AG04449 (cell line): ENCODE measurements at regions of chr13 and their contacts with region 1.

Region 1: GRCh38 chr13:36346222-36347083 is at the start of gene SPART:
- DNase-seq: no peak
- H3K4me3 ChIP-seq: peak within 1 kb of the TSS; percentile 88
- CTCF ChIP-seq: peak; percentile 99

Region 2: GRCh38 chr13:36029166-36029565 is 317.3 kb before region 1 on chr13:
- CTCF ChIA-PET with region 1: no interaction called
- POLR2A ChIA-PET with region 1: no interaction called
- DNase-seq: no peak
- H3K4me3 ChIP-seq: no peak overlapping the region
- CTCF ChIP-seq: no peak

Region 3: DNA sequence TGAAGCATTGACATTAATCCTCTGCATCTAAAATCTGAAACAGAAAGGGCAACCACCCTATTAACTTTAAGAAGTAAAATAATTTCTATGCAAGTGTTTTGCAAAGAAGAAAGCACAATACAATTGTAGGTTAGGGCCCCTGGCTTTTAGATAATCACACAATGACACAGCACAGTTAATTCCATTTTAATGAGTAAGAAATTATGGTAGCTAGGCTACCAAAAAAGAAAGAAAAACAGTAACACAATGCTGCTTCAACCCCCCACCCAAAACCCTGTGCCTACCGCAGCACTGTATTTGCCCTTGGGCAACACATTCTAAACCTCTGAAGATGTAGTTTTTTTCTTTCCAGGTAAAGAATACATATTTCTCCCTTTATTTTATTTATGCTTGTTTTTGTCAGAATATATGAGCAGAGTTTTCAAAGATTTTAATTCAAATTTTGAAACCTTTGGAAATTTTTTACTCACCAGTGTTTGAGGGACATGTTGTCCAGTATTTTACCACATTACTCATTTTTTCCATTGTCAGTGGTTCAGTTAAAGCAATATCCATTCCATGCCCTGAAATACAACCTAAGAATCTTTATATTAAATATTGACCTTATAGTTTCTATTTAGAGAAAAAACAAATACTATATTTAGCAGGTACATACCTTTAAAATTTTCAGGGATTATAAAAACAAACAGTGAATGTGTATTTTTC is 153.2 kb before region 1 on chr13:
- CTCF ChIA-PET with region 1: no interaction called
- POLR2A ChIA-PET with region 1: no interaction called
- DNase-seq: no peak
- H3K4me3 ChIP-seq: no peak overlapping the region
- CTCF ChIP-seq: no peak

Region 4: GRCh38 chr13:36362251-36362650 is 15.8 kb after region 1 on chr13:
- CTCF ChIA-PET with region 1: interaction called, 52 read pairs
- POLR2A ChIA-PET with region 1: no interaction called
- DNase-seq: no peak
- H3K4me3 ChIP-seq: no peak overlapping the region
- CTCF ChIP-seq: no peak

Region 5: DNA sequence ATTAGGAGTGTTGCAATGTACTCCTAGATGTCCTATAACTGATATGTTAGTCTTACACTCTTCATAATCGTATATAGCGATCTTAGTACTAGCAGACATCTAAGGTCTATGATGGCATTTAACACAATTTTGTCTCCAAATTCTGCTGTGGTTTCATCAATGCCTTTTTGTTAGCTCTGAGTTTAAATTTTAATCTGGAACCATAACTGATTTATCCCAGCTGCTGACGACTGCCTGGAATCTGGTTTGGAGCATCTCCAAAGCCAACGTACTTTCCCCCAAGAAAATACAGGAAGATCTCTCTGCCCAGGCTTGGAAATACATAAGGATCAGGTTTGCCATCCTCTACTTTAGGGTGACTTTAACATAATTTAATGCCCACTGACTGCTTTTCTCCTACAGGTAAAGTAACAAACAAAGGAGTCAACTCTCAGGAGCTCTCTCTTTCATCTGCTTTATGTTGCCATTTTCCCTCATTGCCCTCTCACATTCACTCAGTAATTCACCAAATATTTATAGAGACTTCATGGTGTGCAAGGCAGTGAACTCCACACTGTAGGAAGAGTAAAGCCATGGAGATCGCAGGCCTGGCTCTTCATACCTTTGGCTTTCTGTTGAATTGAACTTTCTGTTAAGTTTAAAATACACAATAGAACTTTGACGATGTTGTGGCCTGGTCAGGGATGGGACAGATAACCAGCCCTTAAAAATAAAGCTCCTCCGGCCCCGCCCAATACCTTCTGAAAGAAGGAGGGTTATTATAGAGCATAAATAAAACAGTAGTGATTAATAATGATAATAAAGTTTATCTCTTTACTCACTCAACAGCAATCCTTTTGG is 23.0 kb after region 1 on chr13:
- CTCF ChIA-PET with region 1: interaction called, 22 read pairs
- POLR2A ChIA-PET with region 1: no interaction called
- DNase-seq: no peak
- H3K4me3 ChIP-seq: no peak overlapping the region
- CTCF ChIP-seq: no peak

Region 6: GRCh38 chr13:36395280-36395679 is 48.8 kb after region 1 on chr13:
- CTCF ChIA-PET with region 1: interaction called, 63 read pairs
- POLR2A ChIA-PET with region 1: no interaction called
- DNase-seq: peak; percentile 55
- H3K4me3 ChIP-seq: no peak overlapping the region
- CTCF ChIP-seq: peak; percentile 27